GM10248 (cell line): ENCODE measurements at regions of chr11 and their contacts with region 1.

Region 1: DNA sequence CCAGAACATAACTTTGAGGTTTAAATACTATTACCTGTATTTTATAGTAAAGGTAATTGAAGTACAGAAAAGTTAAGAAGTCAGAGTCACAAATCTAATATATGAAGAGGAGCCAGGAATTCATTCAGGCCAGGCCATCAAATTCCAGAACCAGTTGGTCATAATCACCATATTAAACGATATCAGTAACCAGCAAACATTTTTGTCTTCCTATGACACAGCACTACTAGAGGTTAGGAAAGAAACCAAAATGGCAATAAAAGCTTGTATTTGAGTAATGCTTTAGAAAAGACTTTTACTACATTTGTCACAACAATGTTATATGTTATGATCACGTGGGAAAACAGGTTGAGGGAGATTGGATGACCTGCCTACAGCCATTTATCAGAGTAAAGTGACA is 62.2 kb downstream of the DKK3 start:
- DNase-seq: no peak
- CTCF ChIP-seq: no peak

Region 2: GRCh38 chr11:11291041-11292015 is 654.9 kb before region 1 on chr11:
- CTCF ChIA-PET with region 1: no interaction called
- POLR2A ChIA-PET with region 1: no interaction called
- DNase-seq: no peak
- CTCF ChIP-seq: no peak

Region 3: GRCh38 chr11:11672789-11673188 is 273.4 kb before region 1 on chr11:
- CTCF ChIA-PET with region 1: no interaction called
- POLR2A ChIA-PET with region 1: no interaction called
- DNase-seq: no peak
- CTCF ChIP-seq: no peak

Region 4: DNA sequence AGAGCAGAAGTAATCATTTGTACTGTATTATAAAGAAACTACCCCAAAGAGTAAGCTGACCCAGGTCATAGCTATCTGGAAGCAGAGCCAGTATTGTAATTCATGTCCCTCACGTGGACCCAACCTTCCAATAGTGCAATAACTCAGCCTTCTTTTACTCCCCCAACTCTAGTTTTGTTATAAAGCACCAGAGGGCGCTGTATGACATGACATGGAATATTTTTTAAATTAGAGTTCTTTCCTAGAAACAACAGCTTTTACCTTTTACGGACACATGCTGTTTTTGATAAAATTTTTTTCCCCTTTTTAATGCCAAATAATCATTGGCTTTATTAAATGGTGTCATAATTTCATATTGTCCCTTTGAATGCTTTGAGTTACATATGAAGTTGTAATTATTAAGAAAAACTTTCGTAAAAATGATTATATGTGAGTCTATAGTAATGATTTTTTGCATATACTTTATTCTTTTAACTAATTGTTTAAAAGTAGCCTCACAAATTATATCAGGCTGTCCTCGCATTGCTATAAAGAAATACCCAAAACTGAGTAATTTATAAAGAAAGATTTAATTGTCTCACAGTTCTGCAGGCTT is 14.6 kb before region 1 on chr11:
- CTCF ChIA-PET with region 1: interaction called, 11 read pairs
- POLR2A ChIA-PET with region 1: no interaction called
- DNase-seq: peak; percentile 5
- CTCF ChIP-seq: peak; percentile 32

Region 5: DNA sequence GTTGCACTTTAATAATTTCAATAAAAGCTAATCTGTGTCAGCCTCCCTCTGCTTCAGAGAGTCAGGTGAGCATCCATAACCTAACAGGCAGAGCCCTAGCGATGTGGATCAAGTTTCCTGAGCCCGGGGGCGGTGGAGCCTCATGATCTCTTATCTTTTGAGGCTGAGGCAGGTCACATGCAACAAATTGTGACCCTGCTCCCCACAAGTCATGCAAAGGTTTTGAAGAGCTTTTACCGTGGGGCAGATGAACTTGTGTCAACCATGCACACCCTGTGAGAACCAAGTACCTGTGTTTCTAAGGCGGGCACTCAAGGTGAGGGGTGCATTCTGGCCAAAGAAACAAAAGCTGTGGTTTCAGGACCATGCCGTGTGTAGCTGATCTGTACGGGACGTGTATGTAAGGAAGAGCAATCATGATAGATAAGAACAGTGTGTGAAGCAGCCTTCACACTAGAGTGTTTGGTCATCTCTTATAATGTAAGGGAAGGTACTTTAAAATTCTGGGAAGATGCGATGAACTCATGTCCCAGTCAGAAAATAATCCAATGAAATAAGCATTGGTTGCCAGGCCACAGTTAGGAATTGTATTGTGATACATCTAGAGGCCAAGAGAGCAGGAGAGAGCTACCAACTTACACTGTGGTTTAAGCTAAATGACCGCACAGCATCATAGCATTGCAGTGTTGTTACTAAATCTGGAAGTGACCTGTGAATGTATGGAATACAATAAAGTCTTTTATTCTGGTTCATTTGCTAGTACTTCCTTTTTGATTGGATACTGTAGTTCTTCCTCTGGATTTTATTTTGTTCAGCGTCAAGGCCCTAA is 12.4 kb after region 1 on chr11:
- CTCF ChIA-PET with region 1: interaction called, 16 read pairs
- POLR2A ChIA-PET with region 1: no interaction called
- DNase-seq: no peak
- CTCF ChIP-seq: no peak

Region 6: DNA sequence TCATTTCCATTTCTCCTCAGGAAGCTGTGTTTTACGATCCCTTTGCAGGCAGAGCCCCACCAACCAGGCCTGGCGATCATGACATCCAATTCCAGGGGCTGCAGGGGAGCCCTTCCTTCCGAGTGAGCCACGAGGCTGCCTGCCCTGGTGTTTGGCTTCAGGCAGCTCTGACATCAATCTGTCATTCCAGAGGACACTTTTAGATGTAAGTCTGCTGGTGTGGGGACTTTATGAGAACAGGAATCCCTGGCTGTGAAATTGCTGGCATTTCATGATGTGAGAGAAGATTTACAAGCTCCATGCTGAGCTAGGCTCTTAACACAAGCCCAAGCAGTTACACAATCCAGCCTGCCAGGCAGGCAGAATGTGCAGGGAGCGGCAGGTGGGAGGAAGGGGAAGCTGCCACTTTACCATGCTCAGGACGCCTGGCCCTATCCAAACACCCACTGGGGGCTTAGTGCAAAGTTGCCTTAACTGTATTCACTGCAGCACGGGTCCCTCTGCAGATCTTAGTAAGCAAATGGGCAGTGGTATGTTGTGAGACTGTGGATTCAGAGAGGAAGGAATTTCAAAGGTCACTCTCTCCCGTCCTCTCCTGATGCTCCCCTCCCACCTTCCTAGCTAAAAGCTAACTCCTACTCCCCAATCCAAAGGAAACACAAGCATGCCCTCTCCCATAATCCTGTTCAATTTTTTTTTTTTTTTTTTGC is 120.8 kb after region 1 on chr11:
- CTCF ChIA-PET with region 1: no interaction called
- POLR2A ChIA-PET with region 1: no interaction called
- DNase-seq: no peak
- CTCF ChIP-seq: no peak

Region 7: DNA sequence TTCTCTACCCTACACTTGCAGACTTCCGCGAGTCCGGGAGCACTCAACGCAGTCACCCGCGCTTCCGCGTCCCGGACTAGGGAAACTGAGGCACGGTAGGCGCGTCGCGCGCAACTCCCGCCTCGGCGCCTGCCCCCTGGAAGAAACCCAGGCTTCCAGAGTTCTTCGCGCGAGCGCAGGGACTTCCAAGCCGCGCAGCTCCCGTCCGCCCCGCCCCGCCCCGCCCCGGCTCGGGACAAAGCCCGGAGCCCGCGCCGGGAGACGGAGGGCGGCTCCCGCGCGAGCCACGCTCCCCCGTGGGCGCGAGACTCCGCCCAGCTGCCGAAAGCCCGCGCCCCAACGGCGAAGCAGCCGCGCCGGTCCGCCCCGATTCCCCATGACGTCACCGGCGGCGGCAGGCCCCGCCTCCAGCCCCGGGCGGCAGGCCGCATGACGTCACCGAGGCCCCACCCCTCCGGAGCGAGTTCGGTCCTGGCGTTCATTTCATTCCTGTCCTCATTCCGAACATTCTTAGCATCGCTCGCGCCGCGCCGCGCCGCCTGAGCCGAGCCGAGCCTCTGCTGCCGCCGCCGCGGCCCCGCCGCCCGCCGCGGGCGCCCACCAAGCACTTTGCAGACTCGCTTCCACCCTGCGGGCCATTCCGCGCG is 727.9 kb after region 1 on chr11 and contains the start of gene TEAD1:
- CTCF ChIA-PET with region 1: no interaction called
- POLR2A ChIA-PET with region 1: no interaction called
- DNase-seq: peak; percentile 94
- CTCF ChIP-seq: no peak